GM23248 (cell line): ENCODE measurements at regions of chr10 and their contacts with region 1.

Region 1: DNA sequence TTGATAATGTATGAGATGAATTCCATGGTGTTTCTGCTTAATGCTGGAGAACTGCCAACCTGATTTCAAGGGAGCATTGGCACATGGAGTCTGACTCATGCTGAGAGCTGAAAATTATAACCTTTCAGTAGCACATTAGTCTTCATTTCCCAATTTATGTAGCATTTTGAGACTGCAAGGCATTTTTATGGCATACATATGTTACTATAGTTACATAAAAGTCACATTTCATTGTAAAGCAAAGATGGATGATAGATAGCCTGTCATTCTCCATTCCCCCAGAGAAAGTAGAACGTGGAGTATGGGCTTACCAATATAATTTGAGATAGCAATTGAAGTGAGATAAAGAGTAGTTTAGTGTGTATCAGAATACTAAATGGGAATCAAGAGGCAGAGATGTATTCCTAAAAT is 103.1 kb downstream of the SLC16A9 start:
- DNase-seq: peak; percentile 60
- H3K4me3 ChIP-seq: no peak overlapping the region
- H3K27ac ChIP-seq: no peak overlapping the region
- H3K4me1 ChIP-seq: no peaks in the 10 kb centered on the region
- H3K27me3 ChIP-seq: no peaks in the 10 kb centered on the region

Region 2: GRCh38 chr10:58952747-58953466 is 653.6 kb before region 1 on chr10:
- in situ Hi-C with region 1: loop called (anchors 25 kb)
- DNase-seq: peak; percentile 61
- H3K4me3 ChIP-seq: peak overlapping the region; percentile 33; the same call in 1 of the 2 replicates
- H3K27ac ChIP-seq: peak overlapping the region; percentile 5; the same call in 1 of the 2 replicates
- H3K4me1 ChIP-seq: peaks cover 38% of the 10 kb centered on the region
- H3K27me3 ChIP-seq: no peaks in the 10 kb centered on the region

Region 3: DNA sequence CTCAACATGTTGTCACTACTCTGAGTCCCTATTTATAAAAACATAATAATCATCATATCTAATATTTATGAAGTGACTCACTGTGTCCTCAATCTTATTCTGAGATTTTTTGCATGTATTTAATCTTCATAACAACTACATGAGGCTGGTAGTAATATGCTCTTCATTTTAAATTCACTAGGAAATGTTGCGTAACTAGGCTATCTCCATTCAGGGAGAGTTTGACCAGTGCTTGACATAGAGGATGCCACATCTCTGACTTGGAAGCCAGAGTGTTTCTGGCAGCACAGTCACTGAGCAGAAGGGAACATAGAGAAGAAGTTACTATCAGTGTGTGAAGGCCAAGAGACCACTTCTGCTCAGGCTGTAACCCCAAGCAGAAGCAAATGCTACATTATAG is 333.1 kb before region 1 on chr10:
- in situ Hi-C with region 1: no loop called
- DNase-seq: no peak
- H3K4me3 ChIP-seq: no peak overlapping the region
- H3K27ac ChIP-seq: no peak overlapping the region
- H3K4me1 ChIP-seq: no peaks in the 10 kb centered on the region
- H3K27me3 ChIP-seq: no peaks in the 10 kb centered on the region

Region 4: DNA sequence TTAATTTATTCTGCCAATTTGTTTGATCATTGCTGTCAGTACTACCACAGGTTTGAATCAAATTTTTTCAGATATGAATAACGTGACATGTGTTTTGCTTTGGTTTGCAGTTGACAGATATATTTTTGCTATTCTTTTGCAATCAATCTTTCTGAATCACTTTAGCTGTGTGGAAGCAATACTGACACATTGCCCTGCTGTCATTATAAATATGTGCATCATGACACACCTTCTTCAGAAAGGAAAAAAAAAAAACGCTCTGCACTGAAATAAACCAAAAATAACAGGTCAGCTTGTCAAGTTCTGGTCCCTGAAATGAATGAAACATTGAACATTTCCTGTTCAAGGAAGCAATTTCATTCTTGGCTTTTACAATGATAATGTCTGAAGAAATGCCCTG is 150.4 kb before region 1 on chr10:
- in situ Hi-C with region 1: no loop called
- DNase-seq: no peak
- H3K4me3 ChIP-seq: no peak overlapping the region
- H3K27ac ChIP-seq: no peak overlapping the region
- H3K4me1 ChIP-seq: no peaks in the 10 kb centered on the region
- H3K27me3 ChIP-seq: no peaks in the 10 kb centered on the region